ENCODE measurements at regions of chr2 and their contacts with region 1.

Region 1: GRCh38 chr2:157269922-157270321 is 12.4 kb downstream of the GALNT5 start:
- DNase-seq: no peak
- H3K4me3 Mint-ChIP-seq: no peak overlapping the region
- H3K27ac Mint-ChIP-seq: no peak overlapping the region
- H3K4me1 Mint-ChIP-seq: peaks cover 32% of the 10 kb centered on the region
- H3K27me3 Mint-ChIP-seq: no peaks in the 10 kb centered on the region

Region 2: GRCh38 chr2:157245846-157246764 is 23.8 kb before region 1 on chr2:
- intact Hi-C with region 1: loop called (anchors 2 kb)
- DNase-seq: no peak
- H3K4me3 Mint-ChIP-seq: no peak overlapping the region
- H3K27ac Mint-ChIP-seq: no peak overlapping the region
- H3K4me1 Mint-ChIP-seq: peaks cover 15% of the 10 kb centered on the region
- H3K27me3 Mint-ChIP-seq: peaks cover 1% of the 10 kb centered on the region

Region 3: DNA sequence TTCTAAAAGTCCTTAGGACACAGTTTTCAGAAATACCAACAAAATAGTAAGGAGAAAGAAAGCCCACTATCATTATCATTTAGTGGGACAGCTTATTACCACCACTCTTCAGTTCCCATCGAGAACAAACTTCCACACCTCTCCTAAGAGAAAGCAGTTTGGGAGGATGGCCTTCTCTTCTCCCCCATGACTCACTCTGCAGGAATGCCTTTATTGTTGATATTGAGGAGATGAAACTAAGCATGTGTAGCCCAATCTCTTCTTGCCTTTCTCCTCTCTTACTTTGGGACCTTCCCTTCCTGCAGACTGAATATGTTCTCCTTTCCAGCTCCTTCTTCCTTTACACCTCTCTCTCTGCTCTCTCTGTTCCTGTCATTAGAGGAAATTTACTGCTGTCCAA is 85.7 kb after region 1 on chr2:
- intact Hi-C with region 1: no loop called
- DNase-seq: no peak
- H3K4me3 Mint-ChIP-seq: no peak overlapping the region
- H3K27ac Mint-ChIP-seq: no peak overlapping the region
- H3K4me1 Mint-ChIP-seq: no peaks in the 10 kb centered on the region
- H3K27me3 Mint-ChIP-seq: peaks cover 2% of the 10 kb centered on the region